Activated CD4-positive, alpha-beta T cell treated with anti-CD3 and anti-CD28 coated beads, Interleukin-2, amount 10 ng/mL, durations not matched to agents 7 days and 5 days (primary cell): ENCODE measurements at regions of chr17 and their contacts with region 1.

Region 1: DNA sequence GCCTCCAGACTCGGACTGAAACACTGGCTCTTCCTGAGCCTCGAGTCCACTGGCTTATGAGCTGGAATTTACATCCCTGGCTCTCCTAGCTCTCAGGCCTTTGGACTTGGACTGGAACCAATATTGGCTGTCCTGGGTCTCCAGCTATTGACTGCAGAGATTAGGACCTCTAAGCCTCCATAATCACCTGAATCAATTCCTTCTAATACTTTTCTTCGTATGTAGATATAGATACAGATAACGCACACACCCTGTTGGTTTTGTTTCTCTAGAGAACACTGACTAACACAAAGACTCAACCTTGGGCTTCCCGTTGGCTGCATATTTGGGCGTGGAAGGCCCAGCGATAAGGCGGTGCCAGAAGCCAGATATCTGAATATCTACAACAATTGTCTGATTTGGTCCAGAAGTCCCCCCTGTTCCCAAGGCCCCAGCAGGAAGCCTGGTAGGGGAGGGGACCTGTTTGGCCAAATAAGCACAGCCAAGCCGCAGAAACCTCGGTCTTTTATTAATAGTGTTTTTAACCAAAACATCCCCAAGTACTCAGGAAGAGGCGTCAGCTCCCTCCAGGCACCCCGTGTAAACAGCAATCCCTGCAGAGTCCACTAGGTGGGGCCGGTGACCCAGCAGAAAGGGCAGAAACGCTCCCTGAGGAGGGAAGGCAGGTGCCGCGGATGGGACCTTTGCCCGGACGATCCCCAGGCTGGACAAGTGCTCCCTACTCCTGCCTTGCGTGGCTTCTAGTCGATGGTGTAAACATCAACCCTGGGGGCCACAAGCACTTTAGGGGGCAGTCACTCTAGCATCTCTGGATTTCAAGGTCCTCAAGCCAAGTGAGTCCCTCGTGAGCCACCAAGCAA is 57.0 kb downstream of the ABR start:
- DNase-seq: peak; percentile 86
- H3K4me3 Mint-ChIP-seq: no peak overlapping the region
- H3K27ac Mint-ChIP-seq: peak overlapping the region; percentile 75
- H3K4me1 Mint-ChIP-seq: peaks cover 13% of the 10 kb centered on the region
- H3K27me3 Mint-ChIP-seq: peaks cover 2% of the 10 kb centered on the region

Region 2: DNA sequence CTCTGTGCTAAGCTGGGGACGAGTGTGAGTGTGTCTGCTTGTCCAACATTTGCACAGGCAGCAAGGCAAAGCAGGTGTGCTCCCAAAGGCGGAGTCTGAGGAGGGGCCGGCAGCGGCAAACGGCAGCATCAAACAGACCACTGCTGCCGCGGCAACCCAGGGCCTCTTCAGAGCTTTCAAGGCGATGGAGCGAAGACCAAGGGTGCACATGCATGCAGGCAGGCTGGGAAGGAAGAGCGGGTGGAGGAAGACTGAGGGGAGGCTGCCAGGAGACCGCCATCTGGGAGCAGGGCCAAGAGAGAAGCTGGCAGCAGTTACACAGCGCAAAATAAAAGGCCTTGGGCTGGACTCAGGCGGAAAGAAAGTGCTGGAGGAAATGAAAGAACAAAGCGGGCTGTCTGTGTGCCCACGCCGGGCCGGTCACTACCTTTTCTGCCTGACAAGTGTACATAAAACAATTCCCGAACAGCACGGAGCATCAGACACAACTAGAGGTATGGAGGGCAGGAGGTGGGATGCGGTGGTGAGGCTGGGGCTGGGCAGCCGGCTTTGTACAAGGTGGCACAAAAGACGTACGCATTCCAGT is 117.3 kb before region 1 on chr17:
- CTCF ChIA-PET with region 1: no interaction called
- POLR2A ChIA-PET with region 1: no interaction called
- DNase-seq: no peak
- H3K4me3 Mint-ChIP-seq: no peak overlapping the region
- H3K27ac Mint-ChIP-seq: peak overlapping the region; percentile 22
- H3K4me1 Mint-ChIP-seq: peaks cover 11% of the 10 kb centered on the region
- H3K27me3 Mint-ChIP-seq: no peaks in the 10 kb centered on the region

Region 3: GRCh38 chr17:1186923-1187771 is 64.4 kb after region 1 on chr17:
- CTCF ChIA-PET with region 1: interaction called, 16 read pairs
- POLR2A ChIA-PET with region 1: no interaction called
- DNase-seq: peak; percentile 72
- H3K4me3 Mint-ChIP-seq: no peak overlapping the region
- H3K27ac Mint-ChIP-seq: no peak overlapping the region
- H3K4me1 Mint-ChIP-seq: peaks cover 8% of the 10 kb centered on the region
- H3K27me3 Mint-ChIP-seq: peaks cover 5% of the 10 kb centered on the region

Region 4: DNA sequence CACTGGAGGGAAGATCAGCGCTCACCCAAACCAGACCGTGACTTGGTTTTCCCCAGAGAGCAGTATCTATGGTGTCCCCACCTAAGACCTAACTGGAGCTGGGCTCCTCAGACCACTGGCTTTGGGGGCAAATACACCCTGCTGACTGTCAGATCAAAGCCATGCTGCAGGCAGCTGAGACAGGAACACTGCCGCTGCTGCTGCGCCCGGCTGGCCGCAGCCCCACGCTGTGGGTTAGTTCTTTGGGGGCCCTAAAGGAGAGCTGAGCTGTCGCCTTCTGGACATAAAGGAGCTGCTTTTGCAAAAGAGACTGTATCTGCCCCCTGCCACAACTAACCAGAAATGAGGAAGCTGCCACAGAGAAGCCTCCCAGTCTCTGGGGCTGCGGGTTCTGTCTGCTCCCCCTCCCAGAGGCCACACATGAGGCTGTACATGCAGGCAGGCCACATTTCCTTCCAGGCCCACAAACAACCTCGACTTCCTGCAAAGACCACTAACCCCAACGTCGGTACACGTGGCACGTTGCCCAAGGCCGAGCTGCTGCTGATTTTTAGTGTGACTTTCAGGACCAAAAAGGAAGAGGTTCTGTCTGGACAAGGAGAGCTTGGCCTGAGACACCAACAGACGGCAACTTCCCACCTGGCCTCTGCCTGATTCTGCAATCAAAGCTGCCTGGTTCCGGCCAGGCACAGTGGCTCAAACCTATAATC is 75.2 kb after region 1 on chr17:
- CTCF ChIA-PET with region 1: interaction called, 10 read pairs
- POLR2A ChIA-PET with region 1: no interaction called
- DNase-seq: peak; percentile 63
- H3K4me3 Mint-ChIP-seq: no peak overlapping the region
- H3K27ac Mint-ChIP-seq: peak overlapping the region; percentile 85
- H3K4me1 Mint-ChIP-seq: peaks cover 51% of the 10 kb centered on the region
- H3K27me3 Mint-ChIP-seq: no peaks in the 10 kb centered on the region

Region 5: GRCh38 chr17:1203111-1203966 is 80.6 kb after region 1 on chr17:
- CTCF ChIA-PET with region 1: interaction called, 10 read pairs
- POLR2A ChIA-PET with region 1: no interaction called
- DNase-seq: peak; percentile 41
- H3K4me3 Mint-ChIP-seq: no peak overlapping the region
- H3K27ac Mint-ChIP-seq: no peak overlapping the region
- H3K4me1 Mint-ChIP-seq: peaks cover 31% of the 10 kb centered on the region
- H3K27me3 Mint-ChIP-seq: peaks cover 5% of the 10 kb centered on the region